ENCODE measurements at regions of chr3 and their contacts with region 1.

Region 1: GRCh38 chr3:39189959-39190269 is 2.5 kb downstream of the XIRP1 start:
- DNase-seq: peak; percentile 81
- ATAC-seq: peak; percentile 86
- H3K4me3 ChIP-seq: no peak overlapping the region
- H3K4me3 Mint-ChIP-seq: no peak overlapping the region
- H3K27ac ChIP-seq: no peak overlapping the region
- H3K27ac Mint-ChIP-seq: peak overlapping the region; percentile 47
- H3K4me1 ChIP-seq: peaks cover 8% of the 10 kb centered on the region in 2 donors
- H3K4me1 Mint-ChIP-seq: peaks cover 10% of the 10 kb centered on the region
- H3K27me3 ChIP-seq: peaks cover 0 to 10% (median 0%) of the 10 kb centered on the region in 4 experiments
- H3K27me3 Mint-ChIP-seq: peaks cover 3% of the 10 kb centered on the region
- CTCF ChIP-seq: peak; percentile 80

Region 2: GRCh38 chr3:38966811-38967692 is 222.9 kb before region 1 on chr3:
- CTCF ChIA-PET with region 1: no interaction called
- POLR2A ChIA-PET with region 1: no interaction called
- intact Hi-C with region 1: no loop called
- DNase-seq: no peak
- ATAC-seq: no peak
- H3K4me3 ChIP-seq: no peak overlapping the region
- H3K4me3 Mint-ChIP-seq: no peak overlapping the region
- H3K27ac ChIP-seq: no peak overlapping the region
- H3K27ac Mint-ChIP-seq: no peak overlapping the region
- H3K4me1 ChIP-seq: no peaks in the 10 kb centered on the region
- H3K4me1 Mint-ChIP-seq: no peaks in the 10 kb centered on the region
- H3K27me3 ChIP-seq: no peaks in the 10 kb centered on the region
- H3K27me3 Mint-ChIP-seq: peaks cover 19% of the 10 kb centered on the region
- CTCF ChIP-seq: no peak

Region 3: GRCh38 chr3:39107388-39108199 is 82.3 kb before region 1 on chr3 and contains the starts of genes GORASP1 and TTC21A:
- CTCF ChIA-PET with region 1: interaction called, 25 read pairs
- POLR2A ChIA-PET with region 1: interaction called, 3 read pairs
- intact Hi-C with region 1: no loop called
- DNase-seq: peak; percentile 80
- ATAC-seq: peak; percentile 48
- H3K4me3 ChIP-seq: peak within 1 kb of the TSS; percentile 63 to 99 (median 96)
- H3K4me3 Mint-ChIP-seq: peak within 1 kb of the TSS; percentile 93
- H3K27ac ChIP-seq: peak within 1 kb of the TSS; percentile 63 to 88
- H3K27ac Mint-ChIP-seq: peak within 1 kb of the TSS; percentile 90
- H3K4me1 ChIP-seq: peaks cover 41 to 54% of the 10 kb centered on the region in 2 donors
- H3K4me1 Mint-ChIP-seq: peaks cover 62% of the 10 kb centered on the region
- H3K27me3 ChIP-seq: no peaks in the 10 kb centered on the region
- H3K27me3 Mint-ChIP-seq: no peaks in the 10 kb centered on the region
- CTCF ChIP-seq: no peak
- total RNA-seq, gene GORASP1: 84.0 and 97.5 TPM in 2 replicates
- total RNA-seq, gene TTC21A: 106 and 116 TPM in 2 replicates

Region 4: DNA sequence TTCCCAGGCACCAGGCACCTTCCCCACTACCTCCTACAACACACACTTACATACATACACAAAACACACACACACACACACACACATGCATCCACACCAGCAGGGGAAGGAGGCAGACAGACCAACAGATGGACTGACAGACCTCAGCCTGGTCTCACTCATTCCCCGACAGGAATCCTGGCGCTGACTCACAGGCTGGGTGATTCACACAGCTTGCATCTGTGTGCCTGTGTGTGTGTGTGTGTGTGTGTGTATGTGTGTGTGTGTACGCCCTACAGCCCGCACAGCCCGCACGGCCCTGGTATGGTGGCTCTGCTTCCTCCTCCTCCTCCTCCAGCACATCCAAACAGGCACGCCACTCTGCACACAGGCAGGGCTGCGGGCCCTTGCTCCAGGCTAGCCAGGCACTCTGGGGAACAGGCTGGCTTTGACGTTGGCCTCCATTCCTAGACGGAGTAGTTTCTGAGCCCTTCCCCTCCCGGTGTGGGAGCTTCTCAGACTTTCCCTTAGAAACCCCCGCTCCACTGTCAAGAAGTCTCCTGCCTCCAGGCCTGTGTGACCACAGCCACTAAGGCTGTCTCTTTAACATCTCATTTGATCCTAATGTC is 42.8 kb before region 1 on chr3:
- CTCF ChIA-PET with region 1: interaction called, 10 read pairs
- POLR2A ChIA-PET with region 1: no interaction called
- intact Hi-C with region 1: no loop called
- DNase-seq: peak; percentile 56
- ATAC-seq: peak; percentile 16
- H3K4me3 ChIP-seq: peak overlapping the region; percentile 11 to 61 (median 48)
- H3K4me3 Mint-ChIP-seq: peak overlapping the region; percentile 99
- H3K27ac ChIP-seq: peak overlapping the region; percentile 87 to 98
- H3K27ac Mint-ChIP-seq: peak overlapping the region; percentile 94
- H3K4me1 ChIP-seq: peaks cover 71 to 73% of the 10 kb centered on the region in 2 donors
- H3K4me1 Mint-ChIP-seq: peaks cover 82% of the 10 kb centered on the region
- H3K27me3 ChIP-seq: no peaks in the 10 kb centered on the region
- H3K27me3 Mint-ChIP-seq: no peaks in the 10 kb centered on the region
- CTCF ChIP-seq: no peak

Region 5: GRCh38 chr3:39208463-39209055 is 18.6 kb after region 1 on chr3:
- CTCF ChIA-PET with region 1: interaction called, 143 read pairs
- POLR2A ChIA-PET with region 1: no interaction called
- intact Hi-C with region 1: loop called (anchors 1 kb)
- DNase-seq: peak; percentile 69
- ATAC-seq: peak; percentile 70
- H3K4me3 ChIP-seq: no peak overlapping the region
- H3K4me3 Mint-ChIP-seq: no peak overlapping the region
- H3K27ac ChIP-seq: no peak overlapping the region
- H3K27ac Mint-ChIP-seq: no peak overlapping the region
- H3K4me1 ChIP-seq: peaks cover 3 to 7% of the 10 kb centered on the region in 2 donors
- H3K4me1 Mint-ChIP-seq: peaks cover 9% of the 10 kb centered on the region
- H3K27me3 ChIP-seq: peaks cover 0 to 12% (median 6%) of the 10 kb centered on the region in 4 experiments
- H3K27me3 Mint-ChIP-seq: peaks cover 8% of the 10 kb centered on the region
- CTCF ChIP-seq: peak; percentile 62

Region 6: DNA sequence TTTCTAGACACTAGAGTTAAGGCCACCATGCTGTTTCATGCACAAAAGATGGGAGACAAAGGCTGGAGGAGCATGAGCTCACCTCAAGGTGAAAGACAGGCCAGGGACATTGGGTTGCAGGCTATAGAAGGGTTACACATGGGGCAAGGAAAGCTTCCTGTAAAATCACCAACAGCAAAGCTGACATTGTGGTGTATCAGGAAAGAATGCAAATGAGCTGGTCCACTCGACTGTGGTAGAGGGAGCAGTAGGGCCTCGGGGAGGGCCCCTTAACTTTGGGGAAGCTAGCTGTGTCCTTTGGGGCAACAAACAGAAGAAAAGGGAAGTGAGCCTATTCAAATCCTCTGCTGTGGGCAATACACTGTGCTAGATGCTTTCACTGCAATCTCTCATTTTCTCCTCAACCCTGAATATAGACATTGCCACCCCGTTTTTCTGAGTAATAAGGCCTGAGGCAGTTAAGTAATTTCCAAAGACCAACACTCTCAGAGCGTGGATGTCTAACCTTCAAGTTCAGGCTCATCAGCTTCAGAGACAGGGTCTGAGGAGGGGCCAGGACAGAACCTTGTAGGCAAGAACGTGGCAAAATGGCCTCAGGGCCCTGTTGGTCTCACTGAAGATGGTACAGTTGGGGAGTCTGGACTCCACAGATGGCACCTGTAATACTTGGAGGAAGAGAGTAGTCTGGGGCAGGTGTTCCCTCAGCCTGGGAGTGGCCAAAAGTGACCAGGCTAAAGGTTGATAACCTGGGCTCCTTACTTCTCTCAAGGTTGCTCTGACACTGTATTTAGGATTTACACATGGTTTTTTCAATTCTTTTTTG is 65.8 kb after region 1 on chr3:
- CTCF ChIA-PET with region 1: interaction called, 18 read pairs
- POLR2A ChIA-PET with region 1: no interaction called
- intact Hi-C with region 1: loop called (anchors 2 kb)
- DNase-seq: peak; percentile 90
- ATAC-seq: peak; percentile 97
- H3K4me3 ChIP-seq: peak overlapping the region in 2 of 5 experiments; percentile 21 to 35
- H3K4me3 Mint-ChIP-seq: peak overlapping the region; percentile 81
- H3K27ac ChIP-seq: peak overlapping the region; percentile 77 to 79
- H3K27ac Mint-ChIP-seq: peak overlapping the region; percentile 97
- H3K4me1 ChIP-seq: peaks cover 79 to 82% of the 10 kb centered on the region in 2 donors
- H3K4me1 Mint-ChIP-seq: peaks cover 82% of the 10 kb centered on the region
- H3K27me3 ChIP-seq: peaks cover 0 to 3% (median 0%) of the 10 kb centered on the region in 4 experiments
- H3K27me3 Mint-ChIP-seq: peaks cover 4% of the 10 kb centered on the region
- CTCF ChIP-seq: no peak